ENCODE measurements at regions of chr20 and their contacts with region 1.

Region 1: GRCh38 chr20:63537525-63538203 is 488 bp upstream of the PTK6 start:
- DNase-seq: peak; percentile 97 to 100
- H3K4me3 ChIP-seq: peak overlapping the region; percentile 66
- H3K27ac ChIP-seq: peak overlapping the region; percentile 90
- H3K4me1 ChIP-seq: peaks cover 52% of the 10 kb centered on the region
- H3K27me3 ChIP-seq: no peaks in the 10 kb centered on the region
- CTCF ChIP-seq: peak; percentile 91

Region 2: GRCh38 chr20:63442100-63442493 is 95.6 kb before region 1 on chr20:
- CTCF ChIA-PET with region 1: no interaction called
- POLR2A ChIA-PET with region 1: interaction called, 6 read pairs
- intact Hi-C with region 1: loop called (anchors 2 kb)
- DNase-seq: peak; percentile 44 to 79
- H3K4me3 ChIP-seq: no peak overlapping the region
- H3K27ac ChIP-seq: no peak overlapping the region
- H3K4me1 ChIP-seq: no peaks in the 10 kb centered on the region
- H3K27me3 ChIP-seq: peaks cover 39% of the 10 kb centered on the region
- CTCF ChIP-seq: peak; percentile 81

Region 3: GRCh38 chr20:63574156-63574828 is 36.6 kb after region 1 on chr20 and contains the start of gene HELZ2:
- CTCF ChIA-PET with region 1: interaction called, 12 read pairs
- POLR2A ChIA-PET with region 1: interaction called, 3 read pairs
- intact Hi-C with region 1: no loop called
- DNase-seq: peak in 1 of 2 experiments; percentile 67
- H3K4me3 ChIP-seq: peak within 1 kb of the TSS; percentile 60
- H3K27ac ChIP-seq: no peak within 1 kb of the TSS
- H3K4me1 ChIP-seq: peaks cover 11% of the 10 kb centered on the region
- H3K27me3 ChIP-seq: no peaks in the 10 kb centered on the region
- CTCF ChIP-seq: no peak
- total RNA-seq, gene HELZ2: 33.7 and 52.6 TPM in 2 replicates

Region 4: GRCh38 chr20:63641792-63642544 is 104.3 kb after region 1 on chr20:
- CTCF ChIA-PET with region 1: interaction called, 43 read pairs
- POLR2A ChIA-PET with region 1: interaction called, 36 read pairs
- intact Hi-C with region 1: loop called (anchors 1 kb)
- DNase-seq: peak; percentile 90 to 97
- H3K4me3 ChIP-seq: peak overlapping the region; percentile 92
- H3K27ac ChIP-seq: peak overlapping the region; percentile 21
- H3K4me1 ChIP-seq: peaks cover 16% of the 10 kb centered on the region
- H3K27me3 ChIP-seq: no peaks in the 10 kb centered on the region
- CTCF ChIP-seq: peak; percentile 65

Region 5: GRCh38 chr20:63707549-63708300 is 170.1 kb after region 1 on chr20 and contains the starts of genes ARFRP1 and ZGPAT:
- CTCF ChIA-PET with region 1: interaction called, 6 read pairs
- POLR2A ChIA-PET with region 1: interaction called, 11 read pairs
- intact Hi-C with region 1: loop called (anchors 2 kb)
- DNase-seq: peak; percentile 67 to 91
- H3K4me3 ChIP-seq: peak within 1 kb of the TSS; percentile 96
- H3K27ac ChIP-seq: peak within 1 kb of the TSS; percentile 37
- H3K4me1 ChIP-seq: peaks cover 18% of the 10 kb centered on the region
- H3K27me3 ChIP-seq: no peaks in the 10 kb centered on the region
- CTCF ChIP-seq: no peak
- total RNA-seq, gene ARFRP1: 59.1 and 71.1 TPM in 2 replicates
- total RNA-seq, gene ZGPAT: 27.2 and 31.4 TPM in 2 replicates

Region 6: GRCh38 chr20:63955827-63956663 is 418.4 kb after region 1 on chr20 and contains the start of gene UCKL1:
- CTCF ChIA-PET with region 1: no interaction called
- POLR2A ChIA-PET with region 1: interaction called, 4 read pairs
- intact Hi-C with region 1: loop called (anchors 1 kb)
- DNase-seq: peak; percentile 74 to 94
- H3K4me3 ChIP-seq: peak within 1 kb of the TSS; percentile 74
- H3K27ac ChIP-seq: peak within 1 kb of the TSS; percentile 65
- H3K4me1 ChIP-seq: peaks cover 26% of the 10 kb centered on the region; the same call in 1 of the 2 replicates
- H3K27me3 ChIP-seq: no peaks in the 10 kb centered on the region
- CTCF ChIP-seq: 0 out of 2 replicates have a peak, but pooled peaks have one; percentile 13
- total RNA-seq, gene UCKL1: 51.7 and 55.1 TPM in 2 replicates

Region 7: DNA sequence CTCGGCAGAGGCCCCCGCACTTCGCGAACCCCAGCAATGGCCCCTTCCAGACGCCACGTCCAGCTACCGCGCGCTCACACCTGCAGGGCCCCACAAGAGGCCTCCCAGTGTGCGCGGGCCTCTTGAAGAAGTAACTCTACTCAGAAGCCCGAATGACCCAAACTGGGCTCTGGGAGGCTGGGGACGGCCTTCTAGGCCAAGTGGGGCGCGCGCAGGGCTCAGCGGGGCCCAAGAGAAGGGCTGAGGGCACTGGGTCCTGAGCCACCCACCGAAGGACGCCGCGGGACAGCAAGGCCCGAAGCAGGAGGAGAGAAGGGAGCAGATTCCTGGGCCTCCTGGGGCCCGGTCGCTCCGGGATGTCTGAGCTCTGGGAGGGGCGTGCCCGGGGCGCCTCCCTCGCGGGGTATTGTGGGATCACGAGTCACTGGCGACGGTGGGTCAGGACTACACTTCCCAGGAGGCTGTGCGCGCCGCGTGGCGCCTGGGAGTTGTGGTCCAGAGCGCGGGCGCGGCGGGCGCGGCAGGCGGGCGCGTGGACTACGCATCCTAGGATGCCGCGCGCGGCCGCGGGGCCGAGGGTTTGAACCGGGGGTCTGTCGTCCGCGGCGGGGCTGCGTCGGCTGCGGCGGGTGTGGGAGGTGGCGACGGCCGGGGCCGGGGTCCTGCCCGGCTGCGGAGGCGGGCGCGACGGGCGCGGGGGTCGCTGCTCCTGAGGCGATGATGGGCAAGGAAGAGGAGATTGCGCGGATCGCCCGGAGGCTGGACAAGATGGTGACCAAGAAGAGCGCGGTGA is 525.1 kb after region 1 on chr20 and contains the start of gene TCEA2:
- CTCF ChIA-PET with region 1: interaction called, 4 read pairs
- POLR2A ChIA-PET with region 1: interaction called, 4 read pairs
- intact Hi-C with region 1: loop called (anchors 5 kb)
- DNase-seq: peak; percentile 87 to 97
- H3K4me3 ChIP-seq: peak within 1 kb of the TSS; percentile 90
- H3K27ac ChIP-seq: peak within 1 kb of the TSS; percentile 61
- H3K4me1 ChIP-seq: peaks cover 54% of the 10 kb centered on the region
- H3K27me3 ChIP-seq: no peaks in the 10 kb centered on the region
- CTCF ChIP-seq: no peak
- total RNA-seq, gene TCEA2: 100 and 156 TPM in 2 replicates

Measured in PC-9 (cell line).